Activated B cell treated with CpG ODN at 0.5 μM for 24 hours (primary cell): ENCODE measurements at regions of chr5 and their contacts with region 1.

Region 1: DNA sequence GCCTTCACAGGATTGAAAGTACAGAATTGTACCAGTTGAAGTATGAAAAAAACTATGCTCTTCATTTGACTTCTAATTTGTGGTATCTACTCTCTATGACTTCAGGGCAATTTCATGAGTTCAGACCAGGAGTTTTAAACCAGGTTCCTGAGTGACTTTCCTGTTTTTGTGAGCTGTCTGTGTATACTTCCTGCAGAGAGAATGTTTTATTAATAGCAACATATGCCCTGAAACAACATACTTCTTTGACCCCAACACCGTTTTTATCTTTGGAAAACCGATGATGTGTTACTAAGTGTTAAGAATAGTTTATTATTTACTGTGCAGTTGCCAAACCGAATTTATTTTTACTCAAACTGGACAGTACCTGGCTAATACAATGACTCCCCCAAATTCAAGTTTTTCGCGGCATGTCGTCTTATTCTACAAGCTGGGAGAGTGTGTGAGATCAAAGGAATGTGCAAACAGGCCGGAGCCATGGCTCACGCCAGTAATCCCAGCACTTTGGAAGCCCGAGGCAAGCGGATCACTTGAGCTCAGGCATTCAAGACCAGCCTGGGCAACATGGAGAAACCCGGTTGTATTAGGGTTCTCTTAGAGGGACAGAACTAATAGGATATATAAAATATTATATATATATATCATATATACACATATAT is 58.7 kb upstream of the ERBIN start:
- DNase-seq: no peak
- ATAC-seq: no peak
- H3K4me3 Mint-ChIP-seq: no peak overlapping the region
- H3K27ac Mint-ChIP-seq: no peak overlapping the region
- H3K4me1 Mint-ChIP-seq: peaks cover 12% of the 10 kb centered on the region
- H3K27me3 Mint-ChIP-seq: no peaks in the 10 kb centered on the region
- CTCF ChIP-seq: no peak

Region 2: DNA sequence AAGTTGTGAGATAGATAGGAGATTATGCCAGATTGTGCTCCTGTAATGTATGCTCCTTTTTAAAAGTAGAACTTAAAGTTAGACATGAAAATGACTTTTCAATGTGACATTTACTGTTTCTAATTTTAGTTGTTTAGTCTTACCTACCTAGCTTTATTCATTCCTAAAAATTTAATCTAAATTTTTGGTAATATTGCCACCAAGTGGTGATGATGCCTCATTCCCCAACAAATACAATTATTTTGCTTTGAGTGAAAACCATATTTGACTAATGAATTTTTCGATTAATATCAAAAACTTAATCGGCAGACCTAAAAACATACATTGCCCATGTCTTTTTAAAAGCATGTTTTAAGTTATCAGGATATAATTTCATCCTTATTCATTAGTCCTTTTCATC is 279.0 kb before region 1 on chr5:
- CTCF ChIA-PET with region 1: no interaction called
- POLR2A ChIA-PET with region 1: no interaction called
- intact Hi-C with region 1: no loop called
- DNase-seq: no peak
- ATAC-seq: no peak
- H3K4me3 Mint-ChIP-seq: no peak overlapping the region
- H3K27ac Mint-ChIP-seq: no peak overlapping the region
- H3K4me1 Mint-ChIP-seq: no peaks in the 10 kb centered on the region
- H3K27me3 Mint-ChIP-seq: no peaks in the 10 kb centered on the region
- CTCF ChIP-seq: no peak

Region 3: GRCh38 chr5:65830856-65831255 is 36.8 kb before region 1 on chr5:
- CTCF ChIA-PET with region 1: no interaction called
- POLR2A ChIA-PET with region 1: no interaction called
- intact Hi-C with region 1: loop called (anchors 5 kb)
- DNase-seq: no peak
- ATAC-seq: no peak
- H3K4me3 Mint-ChIP-seq: no peak overlapping the region
- H3K27ac Mint-ChIP-seq: no peak overlapping the region
- H3K4me1 Mint-ChIP-seq: peaks cover 7% of the 10 kb centered on the region
- H3K27me3 Mint-ChIP-seq: no peaks in the 10 kb centered on the region
- CTCF ChIP-seq: no peak